ENCODE measurements at regions of chr6 and their contacts with region 1.

Region 1: GRCh38 chr6:82247634-82248232 is at the start of gene IBTK:
- DNase-seq: peak; percentile 93
- H3K4me3 ChIP-seq: peak within 1 kb of the TSS; percentile 60 to 91 (median 67)
- H3K27ac ChIP-seq: peak within 1 kb of the TSS; percentile 67
- H3K4me1 ChIP-seq: peaks cover 35% of the 10 kb centered on the region
- H3K27me3 ChIP-seq: no peaks in the 10 kb centered on the region
- CTCF ChIP-seq: no peak
- POLR2A ChIP-seq: peak; percentile 87
- total RNA-seq, gene IBTK: 29.5 and 30.5 TPM in 2 replicates

Region 2: DNA sequence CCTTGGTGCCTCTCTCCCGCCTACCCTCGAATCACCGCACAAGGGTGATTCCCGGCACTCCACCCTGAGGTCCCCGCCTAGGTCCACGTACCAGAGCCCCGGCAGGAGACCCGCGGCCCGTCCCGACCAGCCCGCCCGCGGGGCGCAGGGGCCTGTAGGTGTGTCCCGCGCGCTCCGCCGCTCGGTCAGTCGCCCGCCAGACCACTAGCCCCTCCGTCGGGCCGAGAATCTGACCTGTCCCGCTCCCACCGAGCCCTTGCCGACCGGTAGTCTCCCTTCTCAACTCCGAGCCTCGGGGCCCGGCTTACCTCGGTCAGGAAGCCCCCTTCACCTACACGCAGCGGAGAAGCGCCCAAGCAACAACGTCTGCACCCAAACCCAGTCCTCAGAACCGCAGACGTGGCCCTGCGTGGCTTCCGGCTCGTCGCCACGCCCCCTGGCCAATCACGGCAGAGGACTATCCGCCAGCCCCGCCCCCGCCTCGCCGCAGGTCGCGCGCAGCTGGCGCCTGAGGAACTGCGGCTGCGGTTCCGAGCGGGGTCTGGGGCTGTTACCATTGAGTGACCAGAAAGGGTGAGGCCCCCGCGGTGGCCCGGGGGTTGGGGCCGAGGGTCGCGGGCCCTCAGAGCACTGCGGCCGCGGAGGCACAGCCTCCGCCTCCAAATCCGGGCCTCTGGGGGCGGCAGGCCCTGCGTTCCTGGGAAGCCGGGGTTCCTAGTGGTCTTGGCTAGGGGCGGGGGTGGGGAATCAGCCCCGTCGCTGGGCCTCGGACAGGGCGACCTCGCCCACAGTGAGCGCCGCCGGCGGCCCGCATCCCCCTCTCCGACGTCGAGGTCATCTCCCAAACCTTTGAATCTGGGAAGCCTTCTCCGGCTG is 945.4 kb after region 1 on chr6 and contains the starts of genes PGM3 and RWDD2A:
- CTCF ChIA-PET with region 1: no interaction called
- POLR2A ChIA-PET with region 1: no interaction called
- dilution Hi-C with region 1: no loop called
- intact Hi-C with region 1: loop called (anchors 10 kb)
- DNase-seq: peak; percentile 93
- H3K4me3 ChIP-seq: peak within 1 kb of the TSS; percentile 52 to 99 (median 94)
- H3K27ac ChIP-seq: peak within 1 kb of the TSS; percentile 49
- H3K4me1 ChIP-seq: peaks cover 23% of the 10 kb centered on the region
- H3K27me3 ChIP-seq: no peaks in the 10 kb centered on the region
- CTCF ChIP-seq: no peak
- POLR2A ChIP-seq: peak; percentile 86
- total RNA-seq, gene PGM3: 70.7 and 74.8 TPM in 2 replicates
- total RNA-seq, gene RWDD2A: 4.3 and 4.5 TPM in 2 replicates

Region 3: GRCh38 chr6:83430611-83431563 is 1183.2 kb after region 1 on chr6 and contains the start of gene ME1:
- CTCF ChIA-PET with region 1: no interaction called
- POLR2A ChIA-PET with region 1: no interaction called
- dilution Hi-C with region 1: no loop called
- intact Hi-C with region 1: loop called (anchors 10 kb)
- DNase-seq: peak; percentile 77
- H3K4me3 ChIP-seq: peak within 1 kb of the TSS; percentile 60 to 90 (median 73)
- H3K27ac ChIP-seq: peak within 1 kb of the TSS; percentile 84
- H3K4me1 ChIP-seq: peaks cover 7% of the 10 kb centered on the region
- H3K27me3 ChIP-seq: no peaks in the 10 kb centered on the region
- CTCF ChIP-seq: no peak
- POLR2A ChIP-seq: no peak
- total RNA-seq, gene ME1: 27.0 and 29.3 TPM in 2 replicates

Measured in endothelial cell of umbilical vein (primary cell).